HEK293T (cell line): ENCODE measurements at regions of chr1 and their contacts with region 1.

Region 1: DNA sequence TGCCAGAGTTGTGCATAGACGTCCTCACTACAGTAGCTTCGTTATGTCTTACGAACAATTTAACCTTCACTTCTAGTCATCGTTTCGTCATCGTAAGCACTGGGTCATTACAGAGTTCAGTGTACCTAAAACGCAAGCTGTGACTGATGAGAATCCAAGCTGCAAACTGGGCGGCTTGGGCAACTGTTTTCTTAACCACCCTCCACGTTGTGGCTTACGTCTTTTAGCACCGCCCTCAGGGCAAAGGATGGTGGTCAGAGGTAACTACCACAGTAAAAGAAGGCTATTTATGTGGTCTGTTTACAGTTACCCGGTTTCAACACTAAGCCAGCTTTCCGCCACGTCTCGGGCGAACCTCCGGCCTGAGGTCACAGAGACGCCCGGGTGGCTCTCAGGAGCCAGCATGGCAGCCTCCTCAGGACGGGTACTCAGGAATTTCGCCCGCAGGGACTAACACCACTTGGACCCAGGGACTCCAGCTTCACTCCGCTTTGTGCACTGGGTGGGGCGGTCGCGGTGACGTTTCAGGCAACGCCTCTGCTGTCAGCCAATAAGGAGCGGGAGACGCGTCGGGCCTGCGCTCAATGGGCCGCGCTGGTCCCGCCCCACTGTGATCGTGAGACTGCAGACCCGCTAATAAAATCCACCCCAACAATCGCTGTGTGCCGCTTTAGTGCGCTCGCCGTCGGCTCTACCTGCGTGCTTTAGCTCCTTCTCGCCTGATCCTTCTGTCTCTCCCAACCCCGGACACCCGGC is at the start of gene CTH:
- DNase-seq: peak; percentile 99

Region 2: GRCh38 chr1:70083519-70083918 is 327.3 kb before region 1 on chr1:
- CTCF ChIA-PET with region 1: no interaction called
- POLR2A ChIA-PET with region 1: no interaction called
- DNase-seq: no peak

Region 3: GRCh38 chr1:70221241-70222121 is 189.3 kb before region 1 on chr1 and contains the start of gene SRSF11:
- CTCF ChIA-PET with region 1: no interaction called
- POLR2A ChIA-PET with region 1: interaction called, 27 read pairs
- DNase-seq: peak; percentile 98

Region 4: DNA sequence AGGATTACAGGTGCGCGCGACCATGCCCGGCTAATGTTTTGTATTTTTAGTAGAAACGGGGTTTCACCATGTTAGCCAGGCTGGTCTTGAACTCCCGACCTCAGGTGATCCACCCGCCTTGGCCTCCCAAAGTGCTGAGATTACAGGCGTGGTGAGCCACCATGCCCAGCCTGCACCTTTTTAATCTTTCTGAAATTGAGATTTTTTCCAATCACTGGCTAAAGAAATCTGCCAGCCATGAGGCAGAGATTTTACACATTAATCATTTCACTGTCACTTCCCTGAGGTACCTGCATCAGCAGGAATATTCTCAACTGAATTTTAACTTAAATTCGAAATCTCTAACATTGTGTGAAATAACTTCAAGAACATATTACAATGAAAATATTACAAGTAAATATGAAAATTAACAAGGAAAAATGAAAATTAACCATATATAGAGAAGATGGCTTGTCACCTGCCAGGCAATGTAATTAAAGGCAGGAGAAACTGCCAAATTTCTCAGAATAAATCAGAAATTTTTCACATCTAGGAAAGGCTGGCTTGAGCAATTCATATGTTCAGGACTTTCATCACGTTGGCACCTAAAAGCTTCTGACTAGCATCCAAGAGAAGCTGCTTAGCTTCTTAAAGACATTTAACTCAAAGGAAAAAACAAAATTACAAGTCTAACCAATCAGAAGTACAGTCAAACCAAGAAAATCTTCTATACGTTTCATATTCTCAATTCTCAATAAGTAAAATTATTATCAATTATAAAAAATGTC is 62.2 kb before region 1 on chr1:
- CTCF ChIA-PET with region 1: no interaction called
- POLR2A ChIA-PET with region 1: interaction called, 103 read pairs
- DNase-seq: no peak

Region 5: DNA sequence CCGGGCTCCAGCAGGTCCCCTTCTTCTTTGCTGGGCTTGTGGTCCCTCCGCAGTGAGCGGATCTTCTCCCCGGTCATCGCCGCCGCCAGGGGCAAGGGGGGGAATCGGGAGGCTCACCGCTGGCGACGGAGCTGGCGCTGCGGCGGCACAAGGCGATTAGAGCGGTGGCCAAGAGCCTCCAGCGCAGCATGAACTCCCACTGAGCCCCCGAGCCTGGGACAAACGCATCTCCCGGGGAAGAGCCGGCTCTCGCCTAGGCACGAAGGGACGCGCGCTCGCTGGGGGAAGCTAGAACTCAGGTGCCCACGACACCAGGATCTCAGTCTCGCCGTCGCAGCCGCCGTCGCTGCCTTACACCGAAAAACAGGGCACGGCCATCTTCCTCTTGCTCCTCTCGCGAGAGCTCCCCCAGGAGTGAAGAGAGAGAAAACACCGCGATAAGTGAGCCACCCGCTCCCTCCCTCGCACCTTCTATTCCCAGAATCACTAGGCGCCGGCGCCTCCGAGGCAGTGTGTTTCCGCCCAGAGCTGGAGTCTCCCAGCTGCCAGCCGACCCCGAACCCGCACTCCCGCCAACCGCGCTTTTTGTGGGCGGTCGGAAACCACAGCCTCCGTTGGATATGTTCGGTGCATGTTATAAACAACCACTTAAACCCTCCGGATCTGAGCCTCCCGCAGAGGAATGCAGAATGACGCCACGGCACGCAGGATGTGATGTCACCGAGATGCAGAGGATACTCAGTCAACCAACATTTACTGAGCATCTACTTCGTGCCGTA is 56.3 kb before region 1 on chr1 and contains the start of gene ANKRD13C:
- CTCF ChIA-PET with region 1: no interaction called
- POLR2A ChIA-PET with region 1: interaction called, 103 read pairs
- DNase-seq: peak; percentile 99

Region 6: GRCh38 chr1:70382682-70383081 is 28.1 kb before region 1 on chr1:
- CTCF ChIA-PET with region 1: interaction called, 5 read pairs
- POLR2A ChIA-PET with region 1: interaction called, 19 read pairs
- DNase-seq: no peak

Region 7: DNA sequence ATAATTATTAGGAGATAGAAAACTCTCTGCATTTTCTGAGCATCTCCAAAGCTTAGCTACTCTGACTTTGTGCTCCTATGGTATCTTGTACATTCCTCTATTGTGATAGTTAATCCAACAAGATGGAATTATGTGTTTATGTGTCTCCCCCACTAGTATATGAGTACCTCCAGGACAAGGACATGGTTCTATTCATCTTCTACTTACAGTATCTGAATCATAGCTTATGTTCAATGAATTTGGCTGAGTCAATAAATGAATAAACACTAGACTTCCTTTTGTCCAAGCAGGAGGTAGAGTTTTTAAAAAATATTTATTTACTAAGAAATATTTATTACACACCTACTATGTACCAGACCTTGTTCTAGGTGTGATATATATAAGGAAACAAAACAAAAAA is 18.2 kb before region 1 on chr1:
- CTCF ChIA-PET with region 1: no interaction called
- POLR2A ChIA-PET with region 1: interaction called, 25 read pairs
- DNase-seq: no peak